CD8-positive, alpha-beta T cell (primary cell): ENCODE measurements at regions of chr2 and their contacts with region 1.

Region 1: GRCh38 chr2:217610401-217611075 is 392.3 kb downstream of the TNS1 start:
- DNase-seq: peak in 8 of 9 experiments; percentile 11 to 72 (median 41)
- ATAC-seq: peak; percentile 83
- H3K4me3 ChIP-seq: peak overlapping the region in 1 of 2 experiments; percentile 8
- H3K4me3 Mint-ChIP-seq: peak overlapping the region; percentile 42
- H3K27ac ChIP-seq: peak overlapping the region; percentile 29 to 80
- H3K27ac Mint-ChIP-seq: peak overlapping the region; percentile 91
- H3K4me1 ChIP-seq: peaks cover 39% of the 10 kb centered on the region
- H3K4me1 Mint-ChIP-seq: peaks cover 50% of the 10 kb centered on the region
- H3K27me3 ChIP-seq: no peaks in the 10 kb centered on the region
- H3K27me3 Mint-ChIP-seq: no peaks in the 10 kb centered on the region
- CTCF ChIP-seq: no peak

Region 2: DNA sequence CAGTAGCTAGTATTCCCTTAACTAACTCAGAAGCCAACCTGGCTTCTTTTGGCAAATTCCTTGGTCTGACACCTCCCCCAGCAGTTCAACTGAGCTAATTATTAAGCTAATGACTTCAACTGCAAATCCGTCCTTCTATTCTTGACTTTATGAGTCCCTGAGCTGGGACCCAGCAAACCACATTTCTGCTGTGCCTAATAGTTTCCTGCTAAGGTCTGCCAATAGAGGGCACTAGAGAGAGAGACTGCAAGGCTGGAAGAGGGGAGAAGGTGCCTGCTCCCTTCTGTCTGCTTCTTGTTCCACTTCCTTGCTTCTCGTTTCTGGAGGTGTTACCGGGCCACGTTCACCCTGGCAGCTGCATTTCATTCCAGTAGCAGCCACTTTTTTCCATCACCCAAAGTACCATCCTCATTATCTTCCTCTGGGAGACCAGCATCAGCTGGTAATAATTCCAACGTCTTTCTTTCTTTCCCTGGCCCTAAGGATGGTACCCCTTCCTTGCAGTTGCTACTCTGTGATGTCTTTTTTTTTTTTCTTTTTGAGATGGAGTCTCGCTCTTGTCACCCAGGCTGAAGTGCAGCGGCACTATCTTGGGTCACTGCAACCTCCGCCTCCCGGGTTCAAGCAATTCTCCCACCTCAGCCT is 40.3 kb after region 1 on chr2:
- CTCF ChIA-PET with region 1: interaction called, 3 read pairs
- POLR2A ChIA-PET with region 1: no interaction called
- intact Hi-C with region 1: loop called in 1 of 2 experiments (anchors 2 kb)
- DNase-seq: peak in 3 of 9 experiments; percentile 9 to 46 (median 28)
- ATAC-seq: no peak
- H3K4me3 ChIP-seq: no peak overlapping the region
- H3K4me3 Mint-ChIP-seq: no peak overlapping the region
- H3K27ac ChIP-seq: no peak overlapping the region
- H3K27ac Mint-ChIP-seq: no peak overlapping the region
- H3K4me1 ChIP-seq: no peaks in the 10 kb centered on the region
- H3K4me1 Mint-ChIP-seq: peaks cover 5% of the 10 kb centered on the region
- H3K27me3 ChIP-seq: no peaks in the 10 kb centered on the region
- H3K27me3 Mint-ChIP-seq: no peaks in the 10 kb centered on the region
- CTCF ChIP-seq: peak; percentile 46